ENCODE measurements at regions of chr3 and their contacts with region 1.

Region 1: DNA sequence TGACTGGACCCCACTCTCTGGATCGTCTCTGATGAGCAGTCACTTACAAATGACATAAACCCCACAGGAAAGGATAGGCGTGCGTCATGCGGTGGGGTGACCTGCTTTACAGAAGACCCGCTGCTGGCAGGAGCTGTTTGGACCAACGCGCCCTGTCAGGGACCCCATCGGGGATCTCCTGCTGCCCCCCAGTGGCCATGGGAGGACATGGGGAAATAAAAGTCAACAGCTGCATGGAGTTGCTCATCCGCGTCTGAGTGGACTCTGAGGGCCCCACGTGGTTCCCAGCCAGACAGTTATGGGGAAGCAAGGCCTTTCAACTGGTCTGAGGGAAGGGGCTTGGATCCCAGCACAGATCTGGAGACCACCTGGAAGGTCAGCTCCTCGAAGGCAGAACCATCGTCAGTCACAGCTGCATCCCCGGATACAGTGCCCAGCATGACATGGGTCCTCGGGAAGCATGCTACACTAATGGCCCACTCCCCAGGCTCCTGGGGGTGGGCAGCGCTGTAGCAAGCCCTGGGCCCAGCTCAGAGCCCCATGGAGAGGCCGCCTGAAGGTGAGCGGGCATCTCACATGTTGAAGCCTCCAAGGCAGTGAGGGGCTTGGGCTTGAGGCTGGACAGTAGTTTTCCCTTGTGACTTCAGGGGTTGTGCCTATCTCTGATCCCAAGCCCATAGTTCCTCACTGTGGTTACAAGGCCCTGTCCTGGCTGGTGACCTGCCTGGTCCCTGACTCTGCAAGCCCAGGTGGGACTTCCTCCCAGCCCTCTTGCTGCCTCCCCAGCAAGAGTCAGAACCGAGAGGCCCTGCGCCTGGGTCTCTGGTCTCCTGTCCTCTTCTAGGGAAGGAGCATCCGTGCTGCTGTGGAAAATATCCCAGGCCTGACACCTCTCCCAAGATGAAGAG is 32.3 kb downstream of the PTH1R start:
- DNase-seq: peak; percentile 38
- H3K4me3 ChIP-seq: no peak overlapping the region
- CTCF ChIP-seq: peak; percentile 88

Region 2: GRCh38 chr3:46646700-46647099 is 263.1 kb before region 1 on chr3:
- CTCF ChIA-PET with region 1: no interaction called
- POLR2A ChIA-PET with region 1: no interaction called
- DNase-seq: peak; percentile 17
- H3K4me3 ChIP-seq: no peak overlapping the region
- CTCF ChIP-seq: no peak

Region 3: DNA sequence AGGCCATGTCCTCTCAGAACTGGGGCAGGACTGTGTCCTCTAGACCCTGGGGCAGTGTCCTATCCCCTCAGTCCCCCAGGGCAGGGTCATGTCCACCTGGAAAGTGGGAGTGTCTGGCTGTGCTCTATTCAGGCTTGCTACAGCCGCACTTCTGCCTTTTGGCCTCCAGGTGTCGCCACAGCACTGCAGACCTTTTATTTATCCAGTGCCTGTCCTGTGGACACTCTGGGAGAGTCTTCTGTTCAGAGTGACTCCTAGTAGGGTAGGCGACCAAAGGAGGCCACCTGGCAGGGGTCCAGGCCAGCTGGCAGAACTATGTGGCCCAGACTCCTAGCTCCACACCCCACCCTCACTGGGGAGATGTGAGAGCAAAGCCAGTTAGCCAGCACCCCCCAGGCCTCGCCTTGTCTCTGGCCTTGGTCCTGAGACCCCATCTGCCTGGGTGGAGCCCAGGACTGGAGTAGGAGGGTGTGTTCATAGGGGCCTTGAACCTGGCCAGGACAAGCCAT is 204.7 kb before region 1 on chr3:
- CTCF ChIA-PET with region 1: interaction called, 161 read pairs
- POLR2A ChIA-PET with region 1: no interaction called
- DNase-seq: no peak
- H3K4me3 ChIP-seq: no peak overlapping the region
- CTCF ChIP-seq: peak; percentile 93

Region 4: DNA sequence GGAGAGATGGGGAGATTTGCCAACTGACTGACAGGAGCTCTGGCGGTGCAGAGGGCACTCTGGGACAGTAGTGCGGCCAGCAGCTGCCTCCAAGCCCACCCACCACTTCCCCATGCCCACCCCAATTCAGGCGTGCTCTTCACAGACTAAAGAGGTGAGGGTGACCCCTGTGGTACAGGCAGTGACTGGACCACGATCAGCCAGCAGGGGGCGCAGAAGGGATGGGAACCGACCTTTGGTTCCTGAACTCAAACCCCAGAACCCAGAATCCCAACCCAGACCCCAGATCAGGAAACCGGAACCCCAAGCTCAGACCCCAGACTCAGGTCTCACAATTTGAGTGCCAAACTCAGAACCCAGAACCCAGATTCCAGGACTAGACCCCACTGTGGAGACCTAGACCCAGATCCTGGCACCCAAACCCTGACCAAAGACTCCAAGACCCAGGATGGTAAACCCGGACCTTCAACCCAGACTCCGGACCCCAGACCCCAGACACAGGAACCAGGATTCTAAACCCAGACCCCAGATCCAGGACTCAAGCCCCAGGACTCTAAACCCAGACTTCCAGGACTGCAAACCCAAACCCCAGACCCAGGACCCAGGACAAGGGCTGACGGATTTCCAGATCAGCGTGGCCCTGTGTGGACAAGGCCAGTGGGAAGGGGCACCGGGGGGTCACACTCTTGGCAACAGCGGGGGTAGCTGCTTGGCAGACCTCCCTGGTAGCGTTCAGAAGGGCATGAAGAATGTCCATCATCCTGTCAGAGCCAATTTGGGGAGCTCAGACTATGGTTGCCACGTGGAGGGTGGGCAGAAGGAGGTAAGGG is 42.9 kb before region 1 on chr3:
- CTCF ChIA-PET with region 1: interaction called, 52 read pairs
- POLR2A ChIA-PET with region 1: no interaction called
- DNase-seq: no peak
- H3K4me3 ChIP-seq: no peak overlapping the region
- CTCF ChIP-seq: peak; percentile 91

Region 5: GRCh38 chr3:46882377-46883053 is 27.3 kb before region 1 on chr3:
- CTCF ChIA-PET with region 1: interaction called, 19 read pairs
- POLR2A ChIA-PET with region 1: no interaction called
- DNase-seq: no peak
- H3K4me3 ChIP-seq: peak overlapping the region; percentile 59
- CTCF ChIP-seq: no peak

Region 6: GRCh38 chr3:46895204-46895660 is 14.6 kb before region 1 on chr3:
- CTCF ChIA-PET with region 1: interaction called, 19 read pairs
- POLR2A ChIA-PET with region 1: no interaction called
- DNase-seq: no peak
- H3K4me3 ChIP-seq: no peak overlapping the region
- CTCF ChIP-seq: peak; percentile 88

Region 7: DNA sequence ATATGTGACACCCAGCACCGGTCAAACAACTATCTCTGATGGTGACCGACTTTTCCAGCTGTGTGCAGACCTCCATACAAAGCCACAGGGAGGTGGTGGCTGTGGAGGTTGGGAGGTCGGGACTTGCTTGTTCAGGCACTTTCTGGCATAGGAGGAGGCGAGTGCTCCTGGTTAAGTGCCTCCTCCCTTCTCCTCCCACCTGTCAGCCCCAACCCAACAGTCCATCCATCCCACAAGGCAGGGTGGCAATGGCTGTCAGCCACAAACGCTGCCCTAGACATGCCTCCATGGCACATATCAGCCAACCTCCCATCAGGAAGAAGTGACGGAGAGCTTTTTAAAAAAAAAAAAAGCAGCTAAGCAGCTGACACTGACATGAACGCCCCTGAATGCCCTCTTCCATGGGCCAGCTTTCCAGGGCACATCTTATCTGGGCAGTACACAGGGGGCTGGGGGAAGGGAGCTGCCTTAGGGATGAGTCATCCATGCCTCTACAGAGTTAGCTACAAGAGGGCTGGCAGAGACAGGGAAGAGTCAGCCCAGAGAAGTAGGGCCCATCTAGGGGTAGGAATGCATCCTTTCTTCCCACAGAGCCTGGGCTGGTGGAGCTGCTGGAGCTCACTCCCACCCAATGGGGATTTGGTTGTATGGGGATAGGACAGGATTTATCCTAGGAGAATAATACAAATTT is 25.5 kb after region 1 on chr3:
- CTCF ChIA-PET with region 1: interaction called, 17 read pairs
- POLR2A ChIA-PET with region 1: interaction called, 4 read pairs
- DNase-seq: peak; percentile 89
- H3K4me3 ChIP-seq: no peak overlapping the region
- CTCF ChIP-seq: peak; percentile 89

Measured in AG04449 (cell line).